Ascending aorta (tissue), 2 donors: ENCODE measurements at regions of chr1 and their contacts with region 1.

Region 1: GRCh38 chr1:177984136-177984525 is 14.3 kb upstream of the SEC16B start:
- DNase-seq: peak; percentile 28 to 84
- H3K4me3 ChIP-seq: peak overlapping the region in 1 of 2 donors; percentile 60
- H3K27ac ChIP-seq: peak overlapping the region; percentile 66 to 72
- H3K4me1 ChIP-seq: peaks cover 0 to 14% of the 10 kb centered on the region in 2 donors
- H3K27me3 ChIP-seq: no peaks in the 10 kb centered on the region
- CTCF ChIP-seq: no peak

Region 2: GRCh38 chr1:177950506-177950905 is 33.6 kb before region 1 on chr1:
- intact Hi-C with region 1: no loop called
- DNase-seq: no peak
- H3K4me3 ChIP-seq: no peak overlapping the region
- H3K27ac ChIP-seq: no peak overlapping the region
- H3K4me1 ChIP-seq: no peaks in the 10 kb centered on the region
- H3K27me3 ChIP-seq: no peaks in the 10 kb centered on the region
- CTCF ChIP-seq: no peak

Region 3: GRCh38 chr1:178037503-178038253 is 53.5 kb after region 1 on chr1:
- intact Hi-C with region 1: loop called (anchors 2 kb)
- DNase-seq: peak in 1 of 2 donors; percentile 90
- H3K4me3 ChIP-seq: peak overlapping the region; percentile 72 to 79
- H3K27ac ChIP-seq: peak overlapping the region; percentile 66 to 68
- H3K4me1 ChIP-seq: no peaks in the 10 kb centered on the region
- H3K27me3 ChIP-seq: no peaks in the 10 kb centered on the region
- CTCF ChIP-seq: peak in 2 of 3 experiments; percentile 24 to 44